ENCODE measurements at regions of chr11 and their contacts with region 1.

Region 1: GRCh38 chr11:117020287-117020686 is 77.9 kb downstream of the SIK3 start:
- DNase-seq: peak; percentile 70
- ATAC-seq: peak; percentile 81
- H3K4me3 ChIP-seq: peak overlapping the region in 3 of 5 experiments; percentile 3 to 21 (median 13)
- H3K4me3 Mint-ChIP-seq: peak overlapping the region; percentile 65
- H3K27ac ChIP-seq: peak overlapping the region; percentile 77 to 80
- H3K27ac Mint-ChIP-seq: peak overlapping the region; percentile 71
- H3K4me1 ChIP-seq: peaks cover 58 to 66% of the 10 kb centered on the region in 2 donors
- H3K4me1 Mint-ChIP-seq: peaks cover 63% of the 10 kb centered on the region
- H3K27me3 ChIP-seq: no peaks in the 10 kb centered on the region
- H3K27me3 Mint-ChIP-seq: no peaks in the 10 kb centered on the region
- CTCF ChIP-seq: no peak

Region 2: GRCh38 chr11:116792869-116793771 is 227.2 kb before region 1 on chr11:
- CTCF ChIA-PET with region 1: no interaction called
- POLR2A ChIA-PET with region 1: no interaction called
- intact Hi-C with region 1: no loop called
- DNase-seq: no peak
- ATAC-seq: no peak
- H3K4me3 ChIP-seq: no peak overlapping the region
- H3K4me3 Mint-ChIP-seq: no peak overlapping the region
- H3K27ac ChIP-seq: no peak overlapping the region
- H3K27ac Mint-ChIP-seq: no peak overlapping the region
- H3K4me1 ChIP-seq: peaks cover 11 to 15% of the 10 kb centered on the region in 2 donors
- H3K4me1 Mint-ChIP-seq: peaks cover 13% of the 10 kb centered on the region
- H3K27me3 ChIP-seq: peaks cover 0 to 10% (median 0%) of the 10 kb centered on the region in 4 experiments
- H3K27me3 Mint-ChIP-seq: peaks cover 17% of the 10 kb centered on the region
- CTCF ChIP-seq: no peak

Region 3: GRCh38 chr11:116980136-116980793 is 40.0 kb before region 1 on chr11:
- CTCF ChIA-PET with region 1: no interaction called
- POLR2A ChIA-PET with region 1: interaction called, 5 read pairs
- intact Hi-C with region 1: loop called (anchors 5 kb)
- DNase-seq: peak; percentile 88
- ATAC-seq: peak; percentile 97
- H3K4me3 ChIP-seq: peak overlapping the region; percentile 11 to 65 (median 49)
- H3K4me3 Mint-ChIP-seq: peak overlapping the region; percentile 85
- H3K27ac ChIP-seq: peak overlapping the region; percentile 91 to 94
- H3K27ac Mint-ChIP-seq: peak overlapping the region; percentile 95
- H3K4me1 ChIP-seq: peaks cover 62 to 66% of the 10 kb centered on the region in 2 donors
- H3K4me1 Mint-ChIP-seq: peaks cover 63% of the 10 kb centered on the region
- H3K27me3 ChIP-seq: no peaks in the 10 kb centered on the region
- H3K27me3 Mint-ChIP-seq: no peaks in the 10 kb centered on the region
- CTCF ChIP-seq: no peak

Region 4: DNA sequence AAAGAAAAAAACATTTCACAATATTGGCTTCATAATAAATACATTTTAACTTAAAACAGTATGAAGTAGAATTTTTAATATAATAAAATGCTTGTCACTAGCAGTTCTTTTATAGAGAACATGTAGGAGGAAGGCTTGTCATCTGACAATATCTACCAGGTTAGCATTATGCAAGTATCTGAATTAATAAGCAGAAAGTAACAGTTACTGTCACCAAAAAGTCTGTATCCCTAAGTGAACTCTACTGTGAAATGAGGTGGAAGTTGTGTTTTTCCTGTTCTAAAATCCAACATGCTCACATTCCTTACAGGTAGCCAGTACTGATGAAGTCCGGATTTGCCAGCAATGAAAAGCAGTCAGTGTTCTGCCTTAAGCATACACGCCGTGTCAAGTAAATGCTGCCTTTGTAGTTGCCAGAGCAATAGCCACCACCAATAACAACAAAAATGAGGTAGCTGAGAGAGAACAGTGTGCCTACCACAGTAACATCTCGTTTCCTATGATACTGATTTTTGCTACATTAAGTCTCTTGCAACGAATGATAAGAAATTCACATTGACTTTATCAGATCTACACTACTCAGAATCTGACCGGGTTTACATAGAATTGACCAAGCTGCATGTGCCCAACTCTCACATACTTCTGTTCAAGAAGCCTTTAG is 17.5 kb before region 1 on chr11:
- CTCF ChIA-PET with region 1: interaction called, 3 read pairs
- POLR2A ChIA-PET with region 1: no interaction called
- intact Hi-C with region 1: loop called (anchors 2 kb)
- DNase-seq: no peak
- ATAC-seq: peak; percentile 24
- H3K4me3 ChIP-seq: no peak overlapping the region
- H3K4me3 Mint-ChIP-seq: no peak overlapping the region
- H3K27ac ChIP-seq: peak overlapping the region in 1 of 2 donors; percentile 53
- H3K27ac Mint-ChIP-seq: peak overlapping the region; percentile 57
- H3K4me1 ChIP-seq: peaks cover 29 to 52% of the 10 kb centered on the region in 2 donors
- H3K4me1 Mint-ChIP-seq: peaks cover 72% of the 10 kb centered on the region
- H3K27me3 ChIP-seq: no peaks in the 10 kb centered on the region
- H3K27me3 Mint-ChIP-seq: no peaks in the 10 kb centered on the region
- CTCF ChIP-seq: no peak

Region 5: DNA sequence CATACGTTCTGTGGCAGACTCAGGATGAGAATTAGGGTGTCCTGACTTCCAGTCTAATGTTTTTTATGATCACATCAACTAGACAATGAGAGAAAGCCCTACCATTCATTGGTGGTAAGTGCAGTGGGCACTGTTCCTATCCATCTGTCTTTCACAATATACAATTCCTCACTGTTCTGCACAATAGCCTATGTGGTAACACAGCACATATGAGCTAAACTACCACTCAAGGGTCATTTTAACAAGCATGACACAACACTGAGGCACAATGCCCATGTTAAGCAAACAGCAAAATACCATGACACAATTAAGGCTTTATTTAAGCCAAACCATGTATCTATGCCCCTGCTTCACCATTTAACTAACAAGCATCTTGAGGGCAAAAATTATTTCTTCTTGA is 25.7 kb after region 1 on chr11:
- CTCF ChIA-PET with region 1: no interaction called
- POLR2A ChIA-PET with region 1: no interaction called
- intact Hi-C with region 1: no loop called
- DNase-seq: no peak
- ATAC-seq: no peak
- H3K4me3 ChIP-seq: no peak overlapping the region
- H3K4me3 Mint-ChIP-seq: no peak overlapping the region
- H3K27ac ChIP-seq: no peak overlapping the region
- H3K27ac Mint-ChIP-seq: no peak overlapping the region
- H3K4me1 ChIP-seq: peaks cover 6 to 25% of the 10 kb centered on the region in 2 donors
- H3K4me1 Mint-ChIP-seq: peaks cover 63% of the 10 kb centered on the region
- H3K27me3 ChIP-seq: no peaks in the 10 kb centered on the region
- H3K27me3 Mint-ChIP-seq: no peaks in the 10 kb centered on the region
- CTCF ChIP-seq: no peak

Region 6: GRCh38 chr11:117064275-117064674 is 44.0 kb after region 1 on chr11:
- CTCF ChIA-PET with region 1: no interaction called
- POLR2A ChIA-PET with region 1: no interaction called
- intact Hi-C with region 1: loop called (anchors 5 kb)
- DNase-seq: no peak
- ATAC-seq: no peak
- H3K4me3 ChIP-seq: no peak overlapping the region
- H3K4me3 Mint-ChIP-seq: peak overlapping the region; percentile 65
- H3K27ac ChIP-seq: peak overlapping the region; percentile 74 to 91
- H3K27ac Mint-ChIP-seq: peak overlapping the region; percentile 10
- H3K4me1 ChIP-seq: peaks cover 30 to 41% of the 10 kb centered on the region in 2 donors
- H3K4me1 Mint-ChIP-seq: peaks cover 71% of the 10 kb centered on the region
- H3K27me3 ChIP-seq: no peaks in the 10 kb centered on the region
- H3K27me3 Mint-ChIP-seq: no peaks in the 10 kb centered on the region
- CTCF ChIP-seq: no peak